A549 (cell line): ENCODE measurements at regions of chr11 and their contacts with region 1.

Region 1: DNA sequence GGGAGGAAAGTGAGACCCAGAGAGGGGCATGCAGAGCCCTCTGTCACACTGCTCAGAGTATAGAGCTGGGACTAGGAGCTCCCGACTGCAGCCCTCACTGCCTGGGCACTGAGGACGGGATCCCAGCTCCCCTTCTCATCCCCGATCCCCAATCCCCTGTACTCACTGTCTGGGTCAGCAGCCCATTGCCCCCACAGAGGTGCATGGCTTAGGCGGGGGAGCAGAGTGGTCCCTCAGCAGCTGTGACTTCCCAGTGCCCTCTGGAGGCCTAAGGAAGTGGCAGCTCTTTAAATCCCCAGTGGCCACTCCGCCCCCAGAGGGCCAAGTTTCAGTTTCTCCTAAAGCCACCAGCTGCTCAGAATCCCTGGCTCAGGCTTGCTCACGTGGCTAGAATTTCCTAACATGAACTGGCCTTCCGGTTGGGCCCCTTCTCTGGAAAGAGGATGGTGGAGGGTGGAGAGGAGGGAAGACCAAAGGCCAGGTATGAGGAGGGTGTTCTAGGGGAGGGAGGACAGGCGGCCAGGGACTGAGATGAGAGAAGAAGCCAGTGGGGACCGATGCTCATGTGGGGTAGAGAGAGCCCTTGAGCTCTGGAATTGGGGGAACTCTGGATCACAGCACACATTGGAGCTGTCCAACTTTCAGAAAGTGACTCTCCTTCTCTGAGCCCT is at the start of gene BATF2:
- DNase-seq: peak; percentile 76 to 89
- ATAC-seq: peak; percentile 90
- H3K4me3 ChIP-seq: no peak within 1 kb of the TSS
- H3K27ac ChIP-seq: peak within 1 kb of the TSS; percentile 56 to 73
- H3K4me1 ChIP-seq: peaks cover 29% of the 10 kb centered on the region
- CTCF ChIP-seq: peak; percentile 49; the same call in 2 of the 3 replicates
- EP300 ChIP-seq: no peak
- POLR2A ChIP-seq: no peak
- RAD21 ChIP-seq: peak; percentile 64 to 72
- polyA plus RNA-seq, gene BATF2: 0.67 and 0.79 TPM in 2 replicates

Region 2: GRCh38 chr11:64924102-64924851 is 72.6 kb before region 1 on chr11 and contains the start of gene PPP2R5B:
- CTCF ChIA-PET with region 1: interaction called, 16 read pairs
- POLR2A ChIA-PET with region 1: no interaction called
- DNase-seq: peak; percentile 93 to 99
- ATAC-seq: peak; percentile 96 to 97
- H3K4me3 ChIP-seq: peak within 1 kb of the TSS; percentile 71
- H3K27ac ChIP-seq: peak within 1 kb of the TSS; percentile 93 to 96
- H3K4me1 ChIP-seq: peaks cover 14% of the 10 kb centered on the region
- CTCF ChIP-seq: no peak
- EP300 ChIP-seq: no peak
- POLR2A ChIP-seq: peak; percentile 55
- RAD21 ChIP-seq: 0 out of 5 replicates have a peak, but pooled peaks of 1 of the 2 experiments have one; percentile 4
- polyA plus RNA-seq, gene PPP2R5B: 6.9 and 11.1 TPM in 2 replicates

Region 3: DNA sequence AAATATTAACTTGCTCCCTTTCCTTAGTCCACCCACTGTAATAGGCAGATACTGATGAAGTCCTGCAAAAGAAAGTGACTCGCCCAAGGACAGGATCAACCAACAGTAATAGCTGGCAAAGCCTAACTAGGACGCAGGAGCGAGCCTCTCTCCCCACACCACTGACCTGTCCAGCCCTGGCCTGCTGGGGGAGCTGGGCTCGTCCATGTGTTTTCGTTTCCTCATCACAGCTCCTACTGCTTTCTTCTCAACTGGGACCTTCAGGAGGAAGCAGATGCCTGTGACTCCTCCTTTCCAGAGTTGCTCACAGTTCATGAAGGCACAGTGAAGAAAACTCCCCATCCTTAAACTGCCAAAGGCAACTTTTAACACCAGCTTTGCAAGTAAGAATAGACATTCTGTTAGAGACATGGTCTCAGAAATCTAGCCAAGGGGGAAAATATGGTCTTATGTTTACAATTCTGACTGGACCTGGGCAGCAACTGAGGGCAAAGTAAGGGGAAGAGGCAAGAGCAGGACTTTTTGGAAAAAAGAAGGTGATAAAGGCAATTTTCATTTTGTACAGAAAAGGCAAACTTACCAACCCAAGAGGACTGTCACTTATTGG is 49.5 kb before region 1 on chr11:
- CTCF ChIA-PET with region 1: interaction called, 10 read pairs
- POLR2A ChIA-PET with region 1: no interaction called
- DNase-seq: peak in 1 of 2 experiments; percentile 27
- ATAC-seq: peak; percentile 56 to 78; a peak in 5 of 6 replicates
- H3K4me3 ChIP-seq: no peak overlapping the region
- H3K27ac ChIP-seq: no peak overlapping the region
- H3K4me1 ChIP-seq: no peaks in the 10 kb centered on the region
- CTCF ChIP-seq: no peak
- EP300 ChIP-seq: no peak
- POLR2A ChIP-seq: no peak
- RAD21 ChIP-seq: no peak

Region 4: DNA sequence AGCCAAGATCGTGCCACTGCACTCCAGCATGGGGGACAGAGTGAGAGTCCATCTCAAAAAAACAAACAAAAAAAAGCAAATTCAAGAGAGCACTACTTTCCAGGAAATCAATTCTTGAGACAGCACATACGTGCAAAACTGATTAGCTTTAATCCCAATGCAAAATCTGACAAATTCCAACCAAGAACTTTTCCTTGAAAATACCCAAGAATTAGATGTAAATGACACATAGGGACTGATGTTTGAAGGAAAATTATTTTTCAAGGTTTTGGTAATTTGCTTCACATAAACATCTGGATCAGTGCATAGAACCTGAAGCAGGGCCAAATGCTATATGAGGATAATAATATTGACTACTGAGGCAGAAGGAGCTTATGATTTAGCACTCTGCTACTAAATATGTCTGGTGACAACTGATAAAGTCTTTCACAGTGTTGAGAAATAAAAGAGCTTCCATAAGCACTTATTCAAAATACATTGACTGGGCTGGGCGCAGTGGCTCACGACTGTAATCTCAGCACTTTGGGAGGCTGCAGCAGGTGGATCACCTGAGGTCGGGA is 33.7 kb before region 1 on chr11:
- CTCF ChIA-PET with region 1: interaction called, 10 read pairs
- POLR2A ChIA-PET with region 1: no interaction called
- DNase-seq: no peak
- ATAC-seq: no peak
- H3K4me3 ChIP-seq: no peak overlapping the region
- H3K27ac ChIP-seq: no peak overlapping the region
- H3K4me1 ChIP-seq: no peaks in the 10 kb centered on the region
- CTCF ChIP-seq: no peak
- EP300 ChIP-seq: no peak
- POLR2A ChIP-seq: no peak
- RAD21 ChIP-seq: no peak

Region 5: DNA sequence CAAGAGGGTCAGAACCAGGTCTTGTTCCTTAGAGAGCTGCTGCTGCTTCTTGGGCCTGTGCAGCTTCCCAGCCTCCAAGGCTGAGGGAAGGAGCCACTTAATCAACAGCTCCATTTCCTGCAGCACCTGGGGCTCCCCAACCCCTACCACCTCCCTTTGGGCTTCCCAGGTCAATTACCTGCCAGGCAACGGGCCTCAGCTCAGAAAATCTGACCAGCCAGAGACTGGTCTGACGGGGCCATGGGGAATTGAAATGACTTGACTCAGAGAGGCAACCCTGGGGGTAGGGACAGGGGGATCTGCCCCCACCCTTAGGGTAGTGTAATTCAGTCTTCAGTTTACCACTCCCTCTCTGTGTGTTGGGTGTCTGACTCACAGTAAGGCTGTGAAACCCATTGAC is 20.2 kb before region 1 on chr11:
- CTCF ChIA-PET with region 1: interaction called, 15 read pairs
- POLR2A ChIA-PET with region 1: interaction called, 7 read pairs
- DNase-seq: no peak
- ATAC-seq: no peak
- H3K4me3 ChIP-seq: no peak overlapping the region
- H3K27ac ChIP-seq: no peak overlapping the region
- H3K4me1 ChIP-seq: no peaks in the 10 kb centered on the region
- CTCF ChIP-seq: no peak
- EP300 ChIP-seq: no peak
- POLR2A ChIP-seq: no peak
- RAD21 ChIP-seq: no peak